ENCODE measurements at regions of chr12 and their contacts with region 1.

Region 1: DNA sequence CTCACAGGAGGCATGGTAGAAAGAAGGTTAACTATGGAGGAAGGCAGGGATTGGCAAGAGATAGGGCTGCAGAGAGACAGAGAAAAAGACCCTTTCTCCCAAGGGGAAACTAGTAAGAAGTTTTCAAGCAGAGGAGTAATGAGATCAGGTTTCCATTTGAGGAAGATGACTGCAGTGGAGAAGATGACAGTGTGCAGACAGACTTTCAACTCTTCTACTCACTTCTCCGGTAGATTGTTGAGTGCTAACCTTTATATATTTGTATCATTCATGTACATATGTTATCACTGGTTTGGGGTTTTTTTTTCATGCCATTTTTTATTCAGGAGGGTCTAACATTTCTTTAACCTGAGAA is 5.9 kb upstream of the B3GNT4 start:
- DNase-seq: no peak
- H3K4me3 ChIP-seq: no peak overlapping the region
- H3K27ac ChIP-seq: no peak overlapping the region
- H3K4me1 ChIP-seq: no peaks in the 10 kb centered on the region
- H3K27me3 ChIP-seq: no peaks in the 10 kb centered on the region
- CTCF ChIP-seq: no peak
- POLR2A ChIP-seq: no peak

Region 2: DNA sequence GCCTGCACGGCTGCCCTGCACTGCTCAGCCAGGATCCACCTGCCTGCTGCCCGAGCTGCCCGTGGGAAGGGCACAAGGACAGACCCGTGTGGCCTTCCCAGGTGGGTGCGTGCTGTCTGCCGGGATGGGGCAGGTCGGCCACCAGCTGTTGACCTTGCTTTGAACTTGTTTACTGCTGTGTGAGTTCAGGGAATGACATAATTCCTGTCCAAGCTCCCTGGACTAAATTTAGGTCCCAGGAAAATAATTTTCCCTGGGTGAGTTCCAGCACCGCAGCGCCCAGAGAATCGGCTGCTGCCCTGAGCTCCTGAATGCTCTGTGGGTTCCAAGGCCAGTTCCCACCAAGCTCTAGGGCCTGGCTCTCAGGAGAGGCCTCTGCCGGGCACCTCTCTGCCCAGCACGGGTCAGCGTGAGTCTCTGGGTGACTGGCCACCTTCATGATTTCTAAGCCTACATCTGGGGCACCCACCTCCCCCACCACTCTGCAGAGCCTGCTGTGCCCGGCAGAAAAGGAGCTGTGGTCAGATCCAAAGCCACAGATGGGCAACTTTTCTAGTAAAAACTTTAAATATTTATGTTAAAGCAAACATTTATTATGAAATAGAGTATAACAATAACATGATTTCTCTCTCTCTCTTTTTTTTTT is 146.2 kb before region 1 on chr12:
- intact Hi-C with region 1: loop called (anchors 5 kb)
- DNase-seq: peak in 1 of 2 donors; percentile 25
- H3K4me3 ChIP-seq: no peak overlapping the region
- H3K27ac ChIP-seq: peak overlapping the region in 1 of 3 donors; percentile 19
- H3K4me1 ChIP-seq: peaks cover 0 to 9% of the 10 kb centered on the region in 2 donors
- H3K27me3 ChIP-seq: no peaks in the 10 kb centered on the region
- CTCF ChIP-seq: no peak
- POLR2A ChIP-seq: no peak

Region 3: GRCh38 chr12:122081697-122082221 is 115.8 kb before region 1 on chr12:
- intact Hi-C with region 1: no loop called
- DNase-seq: peak; percentile 32 to 35
- H3K4me3 ChIP-seq: peak overlapping the region in 1 of 3 donors; percentile 80
- H3K27ac ChIP-seq: peak overlapping the region; percentile 73 to 83 (median 82)
- H3K4me1 ChIP-seq: peaks cover 35 to 46% of the 10 kb centered on the region in 2 donors
- H3K27me3 ChIP-seq: no peaks in the 10 kb centered on the region
- CTCF ChIP-seq: peak in 1 of 6 experiments; percentile 22
- POLR2A ChIP-seq: peak in 1 of 2 donors; percentile 37

Region 4: DNA sequence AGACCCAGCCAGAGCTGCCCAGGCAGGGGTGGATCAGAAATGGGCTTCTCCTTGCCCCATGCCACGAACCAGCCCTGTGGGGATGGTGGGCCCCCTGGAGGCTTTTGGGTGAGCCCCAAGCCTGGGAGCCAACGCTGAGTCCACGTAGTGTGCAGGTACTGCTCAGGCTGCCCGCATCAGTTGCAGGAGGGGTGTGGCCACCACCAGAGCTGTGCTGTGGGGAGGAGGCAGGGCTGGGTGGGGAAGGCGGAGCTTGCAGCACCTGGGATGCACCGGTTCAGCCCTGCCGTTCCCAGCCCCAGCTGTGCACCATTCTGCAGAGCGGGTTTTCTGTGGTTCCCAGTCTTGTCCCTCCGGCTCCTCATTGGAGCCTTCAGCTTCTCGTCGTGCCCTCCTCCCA is 59.9 kb before region 1 on chr12:
- intact Hi-C with region 1: no loop called
- DNase-seq: peak; percentile 39 to 50
- H3K4me3 ChIP-seq: no peak overlapping the region
- H3K27ac ChIP-seq: peak overlapping the region in 2 of 3 donors; percentile 2 to 9
- H3K4me1 ChIP-seq: peaks cover 14 to 19% of the 10 kb centered on the region in 2 donors
- H3K27me3 ChIP-seq: no peaks in the 10 kb centered on the region
- CTCF ChIP-seq: no peak
- POLR2A ChIP-seq: no peak

Region 5: GRCh38 chr12:122148657-122149056 is 48.9 kb before region 1 on chr12:
- intact Hi-C with region 1: no loop called
- DNase-seq: no peak
- H3K4me3 ChIP-seq: no peak overlapping the region
- H3K27ac ChIP-seq: no peak overlapping the region
- H3K4me1 ChIP-seq: no peaks in the 10 kb centered on the region
- H3K27me3 ChIP-seq: no peaks in the 10 kb centered on the region
- CTCF ChIP-seq: no peak
- POLR2A ChIP-seq: no peak

Region 6: GRCh38 chr12:122500685-122501488 is 303.3 kb after region 1 on chr12 and contains the start of gene ZCCHC8:
- intact Hi-C with region 1: no loop called
- DNase-seq: peak; percentile 98
- H3K4me3 ChIP-seq: peak within 1 kb of the TSS; percentile 62 to 81 (median 70)
- H3K27ac ChIP-seq: peak within 1 kb of the TSS; percentile 92 to 97 (median 94)
- H3K4me1 ChIP-seq: peaks cover 9 to 19% of the 10 kb centered on the region in 2 donors
- H3K27me3 ChIP-seq: no peaks in the 10 kb centered on the region
- CTCF ChIP-seq: peak in 2 of 6 experiments; percentile 27 to 36
- POLR2A ChIP-seq: peak; percentile 40 to 97
- total RNA-seq, gene ZCCHC8: 30.4 to 40.8 (median 37.5) TPM